B cell (primary cell): ENCODE measurements at regions of chr3 and their contacts with region 1.

Region 1: DNA sequence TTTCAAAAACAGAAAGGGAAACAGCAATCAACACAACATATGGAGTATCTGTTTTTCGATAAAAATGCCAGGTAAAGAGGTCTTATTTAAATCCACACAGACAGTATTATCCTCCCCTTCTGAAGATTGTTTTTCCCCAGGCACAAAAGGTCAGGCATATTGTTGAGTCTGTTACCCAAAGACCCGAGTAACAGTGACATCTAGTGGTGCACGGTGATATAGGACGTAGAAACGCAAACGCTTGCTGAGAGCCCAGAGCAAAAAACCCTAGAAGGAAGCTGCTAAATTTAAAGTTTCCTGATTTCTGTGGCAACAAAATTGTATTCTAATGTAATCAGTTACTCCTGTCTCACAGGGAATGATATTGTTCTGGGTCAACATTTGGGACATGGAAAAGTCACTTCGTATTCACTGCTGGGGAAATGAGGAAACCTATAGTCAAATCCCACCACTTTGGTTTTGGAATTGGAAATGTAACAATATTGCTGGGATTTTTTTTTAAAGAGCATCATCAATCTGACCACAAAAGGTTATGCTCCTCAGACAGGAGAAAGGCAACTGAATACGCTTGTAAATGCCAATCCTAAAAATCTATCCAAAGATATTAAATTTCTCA is 312.7 kb upstream of the CCDC54 start:
- DNase-seq: peak; percentile 68
- ATAC-seq: peak; percentile 64
- H3K4me3 ChIP-seq: no peak overlapping the region
- H3K4me3 Mint-ChIP-seq: no peak overlapping the region
- H3K27ac ChIP-seq: no peak overlapping the region
- H3K27ac Mint-ChIP-seq: no peak overlapping the region
- H3K4me1 ChIP-seq: no peaks in the 10 kb centered on the region
- H3K4me1 Mint-ChIP-seq: peaks cover 4% of the 10 kb centered on the region
- H3K27me3 ChIP-seq: peaks cover 0 to 6% (median 0%) of the 10 kb centered on the region in 4 experiments
- H3K27me3 Mint-ChIP-seq: peaks cover 19% of the 10 kb centered on the region
- CTCF ChIP-seq: peak; percentile 93

Region 2: GRCh38 chr3:106824856-106825255 is 239.7 kb before region 1 on chr3:
- CTCF ChIA-PET with region 1: interaction called, 7 read pairs
- POLR2A ChIA-PET with region 1: no interaction called
- intact Hi-C with region 1: loop called (anchors 1 kb)
- DNase-seq: peak; percentile 14
- ATAC-seq: no peak
- H3K4me3 ChIP-seq: no peak overlapping the region
- H3K4me3 Mint-ChIP-seq: no peak overlapping the region
- H3K27ac ChIP-seq: no peak overlapping the region
- H3K27ac Mint-ChIP-seq: no peak overlapping the region
- H3K4me1 ChIP-seq: no peaks in the 10 kb centered on the region
- H3K4me1 Mint-ChIP-seq: no peaks in the 10 kb centered on the region
- H3K27me3 ChIP-seq: no peaks in the 10 kb centered on the region
- H3K27me3 Mint-ChIP-seq: no peaks in the 10 kb centered on the region
- CTCF ChIP-seq: no peak

Region 3: DNA sequence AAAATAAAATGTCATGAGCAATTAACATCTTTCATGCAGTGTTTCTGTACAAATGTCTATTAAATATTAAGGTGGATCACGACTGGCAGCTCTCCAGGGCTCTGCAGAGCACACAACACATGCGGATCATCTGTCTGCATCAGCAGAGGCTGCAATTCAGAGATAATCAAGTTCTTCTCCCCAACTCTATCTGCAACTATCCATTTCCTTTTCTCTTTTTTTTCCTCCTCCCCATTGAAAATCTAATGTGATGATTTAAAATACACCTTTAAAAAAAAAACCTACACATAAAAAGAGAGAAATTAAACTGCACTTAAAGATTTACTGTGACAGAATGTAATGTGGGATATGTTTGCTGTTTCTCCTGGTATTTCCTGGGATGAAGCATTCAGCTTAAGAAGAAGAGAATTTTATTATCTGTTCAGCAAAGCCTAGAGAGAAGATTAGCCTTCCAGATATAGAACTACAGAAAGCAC is 40.0 kb before region 1 on chr3:
- CTCF ChIA-PET with region 1: no interaction called
- POLR2A ChIA-PET with region 1: no interaction called
- intact Hi-C with region 1: no loop called
- DNase-seq: no peak
- ATAC-seq: no peak
- H3K4me3 ChIP-seq: no peak overlapping the region
- H3K4me3 Mint-ChIP-seq: no peak overlapping the region
- H3K27ac ChIP-seq: no peak overlapping the region
- H3K27ac Mint-ChIP-seq: no peak overlapping the region
- H3K4me1 ChIP-seq: no peaks in the 10 kb centered on the region
- H3K4me1 Mint-ChIP-seq: no peaks in the 10 kb centered on the region
- H3K27me3 ChIP-seq: no peaks in the 10 kb centered on the region
- H3K27me3 Mint-ChIP-seq: no peaks in the 10 kb centered on the region
- CTCF ChIP-seq: no peak